Tibial artery (tissue), 4 donors: ENCODE measurements at regions of chr1 and their contacts with region 1.

Region 1: DNA sequence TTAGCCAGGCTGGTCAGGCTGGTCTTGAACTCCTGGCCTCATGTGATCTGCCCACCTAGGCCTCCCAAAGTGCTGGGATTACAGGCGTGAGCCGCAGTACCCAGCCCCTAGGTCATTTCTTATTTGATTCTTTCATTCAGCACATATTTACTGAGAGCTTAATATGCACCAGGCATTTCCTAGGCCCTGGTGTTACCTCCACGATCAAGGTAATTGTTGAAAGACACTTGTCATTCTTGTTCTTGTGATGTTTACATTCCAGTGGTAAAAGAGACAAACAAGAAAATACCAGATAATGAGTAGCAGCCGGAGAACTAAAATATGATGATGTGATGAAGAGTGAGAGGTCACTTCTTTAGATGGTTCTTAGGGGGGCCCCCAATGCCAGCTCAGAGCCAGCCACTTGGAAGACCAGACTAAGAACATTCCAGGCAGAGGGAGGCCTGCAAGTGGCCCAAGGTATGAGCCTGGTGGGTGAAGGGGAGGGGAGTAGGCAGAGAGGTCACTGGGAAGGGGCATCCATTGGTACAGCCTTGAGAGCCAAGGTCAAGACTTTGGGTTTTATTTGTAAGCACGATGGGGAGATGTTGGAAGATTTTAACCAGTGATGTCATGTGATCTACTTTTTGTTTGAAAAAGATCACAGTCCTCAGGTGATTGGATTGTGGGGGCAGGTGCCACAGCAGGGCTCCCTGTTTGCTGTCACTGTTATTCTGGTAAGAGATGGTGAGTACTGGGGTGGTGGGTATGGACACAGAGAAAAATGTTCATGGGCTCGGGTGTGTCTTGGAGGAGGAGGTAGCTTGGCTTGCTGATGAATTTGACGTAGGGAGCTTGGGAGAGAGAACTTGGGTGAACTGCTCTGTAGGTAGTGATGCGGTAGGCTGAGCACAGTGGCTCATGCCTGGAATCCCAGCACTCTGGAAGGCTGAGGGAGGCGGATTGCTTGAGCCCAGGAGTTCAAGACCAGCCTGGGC is 18.7 kb downstream of the UBE2Q1 start:
- DNase-seq: no peak
- H3K4me3 ChIP-seq: no peak overlapping the region
- H3K27ac ChIP-seq: no peak overlapping the region
- H3K4me1 ChIP-seq: no peaks in the 10 kb centered on the region
- H3K27me3 ChIP-seq: peaks cover 0 to 41% of the 10 kb centered on the region in 2 donors
- CTCF ChIP-seq: no peak

Region 2: GRCh38 chr1:154493276-154493675 is 46.5 kb before region 1 on chr1:
- intact Hi-C with region 1: loop called (anchors 5 kb)
- DNase-seq: peak in 1 of 2 donors; percentile 42
- H3K4me3 ChIP-seq: no peak overlapping the region
- H3K27ac ChIP-seq: no peak overlapping the region
- H3K4me1 ChIP-seq: peaks cover 0 to 3% (median 0%) of the 10 kb centered on the region in 4 donors
- H3K27me3 ChIP-seq: peaks cover 0 to 58% of the 10 kb centered on the region in 2 donors
- CTCF ChIP-seq: no peak